A673 (cell line): ENCODE measurements at regions of chr3 and their contacts with region 1.

Region 1: GRCh38 chr3:113575206-113575605 is 42.9 kb downstream of the SIDT1 start:
- DNase-seq: no peak
- H3K4me3 ChIP-seq: no peak overlapping the region
- H3K27ac ChIP-seq: no peak overlapping the region
- H3K4me1 ChIP-seq: no peaks in the 10 kb centered on the region
- H3K27me3 ChIP-seq: peaks cover 5% of the 10 kb centered on the region
- CTCF ChIP-seq: no peak

Region 2: GRCh38 chr3:113019182-113020137 is 555.7 kb before region 1 on chr3:
- CTCF ChIA-PET with region 1: interaction called, 20 read pairs
- POLR2A ChIA-PET with region 1: no interaction called
- intact Hi-C with region 1: no loop called
- DNase-seq: peak; percentile 97
- H3K4me3 ChIP-seq: peak overlapping the region; percentile 87
- H3K27ac ChIP-seq: peak overlapping the region; percentile 95
- H3K4me1 ChIP-seq: peaks cover 9% of the 10 kb centered on the region
- H3K27me3 ChIP-seq: no peaks in the 10 kb centered on the region
- CTCF ChIP-seq: no peak

Region 3: DNA sequence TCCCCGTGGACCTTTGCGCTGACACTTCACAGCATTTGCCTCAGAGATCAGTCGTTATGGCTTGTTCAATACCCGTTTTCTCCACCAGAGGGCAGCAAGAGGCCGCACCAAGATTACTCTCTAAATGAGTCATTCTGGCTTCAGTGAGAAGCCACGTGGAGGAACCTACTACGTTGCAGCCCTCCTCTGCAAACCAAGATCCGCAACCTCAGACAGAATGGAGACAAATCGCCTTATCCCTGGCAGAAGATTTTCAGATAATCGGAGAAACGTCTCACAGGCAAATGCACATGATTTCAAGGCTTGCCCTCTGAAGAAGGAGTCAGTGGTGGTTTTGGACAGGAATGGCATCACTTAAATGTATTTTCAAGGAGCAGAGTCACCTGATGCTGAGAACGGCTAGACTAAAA is 523.9 kb before region 1 on chr3:
- CTCF ChIA-PET with region 1: no interaction called
- POLR2A ChIA-PET with region 1: no interaction called
- intact Hi-C with region 1: loop called (anchors 1 kb)
- DNase-seq: peak; percentile 87
- H3K4me3 ChIP-seq: no peak overlapping the region
- H3K27ac ChIP-seq: no peak overlapping the region
- H3K4me1 ChIP-seq: peaks cover 22% of the 10 kb centered on the region
- H3K27me3 ChIP-seq: peaks cover 15% of the 10 kb centered on the region
- CTCF ChIP-seq: peak; percentile 86

Region 4: GRCh38 chr3:113495035-113495434 is 80.2 kb before region 1 on chr3:
- CTCF ChIA-PET with region 1: interaction called, 8 read pairs
- POLR2A ChIA-PET with region 1: no interaction called
- intact Hi-C with region 1: loop called (anchors 1 kb)
- DNase-seq: peak; percentile 46
- H3K4me3 ChIP-seq: no peak overlapping the region
- H3K27ac ChIP-seq: no peak overlapping the region
- H3K4me1 ChIP-seq: no peaks in the 10 kb centered on the region
- H3K27me3 ChIP-seq: no peaks in the 10 kb centered on the region
- CTCF ChIP-seq: peak; percentile 62

Region 5: DNA sequence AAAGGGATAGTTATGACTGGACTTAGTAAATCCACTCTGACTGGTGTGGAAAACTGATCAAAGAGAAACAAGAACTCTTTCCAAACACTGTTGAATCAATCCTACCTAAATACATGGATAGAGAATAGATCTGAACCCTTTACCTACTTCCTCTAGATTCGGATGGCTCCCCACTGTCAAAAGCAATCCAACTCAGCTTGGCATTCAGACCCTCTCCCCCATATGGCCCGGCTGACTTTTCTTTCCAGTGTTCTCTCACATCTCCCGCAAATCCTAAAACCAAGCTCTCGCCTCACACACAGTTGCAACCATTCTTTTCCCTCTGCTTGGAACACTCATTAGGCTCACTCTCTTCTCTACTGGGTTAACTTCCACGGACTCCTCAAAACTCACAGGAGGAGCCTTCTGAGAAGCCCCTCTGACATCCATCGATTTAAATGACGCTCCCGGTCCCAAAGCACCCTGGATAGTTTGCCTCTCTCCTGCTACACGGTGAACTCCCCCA is 60.9 kb before region 1 on chr3:
- CTCF ChIA-PET with region 1: interaction called, 9 read pairs
- POLR2A ChIA-PET with region 1: interaction called, 11 read pairs
- intact Hi-C with region 1: no loop called
- DNase-seq: no peak
- H3K4me3 ChIP-seq: peak overlapping the region; percentile 77
- H3K27ac ChIP-seq: peak overlapping the region; percentile 75
- H3K4me1 ChIP-seq: peaks cover 3% of the 10 kb centered on the region
- H3K27me3 ChIP-seq: no peaks in the 10 kb centered on the region
- CTCF ChIP-seq: no peak

Region 6: GRCh38 chr3:114071786-114072185 is 496.6 kb after region 1 on chr3:
- CTCF ChIA-PET with region 1: no interaction called
- POLR2A ChIA-PET with region 1: no interaction called
- intact Hi-C with region 1: no loop called
- DNase-seq: no peak
- H3K4me3 ChIP-seq: no peak overlapping the region
- H3K27ac ChIP-seq: no peak overlapping the region
- H3K4me1 ChIP-seq: no peaks in the 10 kb centered on the region
- H3K27me3 ChIP-seq: no peaks in the 10 kb centered on the region
- CTCF ChIP-seq: no peak